Activated CD4-positive, alpha-beta T cell treated with anti-CD3 and anti-CD28 coated beads, Interleukin-2, amount 10 ng/mL, durations not matched to agents 24 days and 14 days (primary cell): ENCODE measurements at regions of chr5 and their contacts with region 1.

Region 1: DNA sequence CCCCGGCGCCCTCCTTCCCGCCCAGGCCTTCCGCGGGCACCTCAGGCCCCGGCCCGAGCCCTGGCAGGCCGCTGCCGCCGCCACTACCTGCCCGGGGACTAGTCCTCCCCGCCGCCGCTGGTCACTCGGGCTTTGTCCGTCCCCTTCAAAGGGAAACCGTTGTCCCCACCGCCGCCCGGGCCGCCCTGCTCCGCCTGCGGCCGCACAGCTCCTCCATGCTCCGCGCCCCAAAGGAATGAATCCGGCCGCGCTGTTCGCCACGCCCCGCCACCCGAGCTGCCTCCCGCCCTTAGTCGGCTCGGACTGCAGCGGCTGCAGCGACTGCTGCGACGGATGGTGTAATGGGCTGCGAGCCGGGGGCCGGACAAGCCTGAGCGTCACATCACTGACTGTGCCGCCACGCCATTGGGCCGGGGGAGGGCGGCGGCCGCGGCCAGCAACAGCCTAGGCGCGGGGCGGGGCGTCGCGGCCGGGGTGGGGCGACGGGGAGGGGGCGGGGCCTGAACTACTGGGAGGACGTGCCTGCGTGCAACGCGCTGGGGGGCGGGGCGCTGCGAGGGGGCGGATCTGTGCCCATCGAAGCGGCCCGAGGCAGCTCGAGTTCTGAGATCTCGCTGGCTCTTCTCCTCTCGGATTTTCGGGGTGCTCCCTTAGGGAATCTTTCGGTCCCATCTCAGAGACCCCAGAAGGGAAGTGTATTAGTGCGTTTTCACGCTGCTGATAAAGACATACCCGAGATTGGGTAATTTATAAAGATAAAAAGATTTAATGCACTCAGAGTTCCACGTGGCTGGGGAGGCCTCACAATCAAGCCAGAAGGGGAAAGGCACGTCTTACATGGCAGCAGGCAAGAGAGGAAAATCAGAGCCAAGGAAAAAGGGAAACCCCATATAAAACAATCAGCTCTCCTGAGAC is at the start of gene FEM1C:
- DNase-seq: peak; percentile 97
- H3K4me3 Mint-ChIP-seq: peak within 1 kb of the TSS; percentile 99
- H3K27ac Mint-ChIP-seq: peak within 1 kb of the TSS; percentile 100
- H3K4me1 Mint-ChIP-seq: peaks cover 38% of the 10 kb centered on the region
- H3K27me3 Mint-ChIP-seq: no peaks in the 10 kb centered on the region
- total RNA-seq, gene FEM1C: 13.9 and 14.6 TPM in 2 replicates

Region 2: GRCh38 chr5:114166081-114166480 is 1378.6 kb before region 1 on chr5:
- intact Hi-C with region 1: no loop called
- DNase-seq: no peak
- H3K4me3 Mint-ChIP-seq: no peak overlapping the region
- H3K27ac Mint-ChIP-seq: no peak overlapping the region
- H3K4me1 Mint-ChIP-seq: no peaks in the 10 kb centered on the region
- H3K27me3 Mint-ChIP-seq: no peaks in the 10 kb centered on the region

Region 3: DNA sequence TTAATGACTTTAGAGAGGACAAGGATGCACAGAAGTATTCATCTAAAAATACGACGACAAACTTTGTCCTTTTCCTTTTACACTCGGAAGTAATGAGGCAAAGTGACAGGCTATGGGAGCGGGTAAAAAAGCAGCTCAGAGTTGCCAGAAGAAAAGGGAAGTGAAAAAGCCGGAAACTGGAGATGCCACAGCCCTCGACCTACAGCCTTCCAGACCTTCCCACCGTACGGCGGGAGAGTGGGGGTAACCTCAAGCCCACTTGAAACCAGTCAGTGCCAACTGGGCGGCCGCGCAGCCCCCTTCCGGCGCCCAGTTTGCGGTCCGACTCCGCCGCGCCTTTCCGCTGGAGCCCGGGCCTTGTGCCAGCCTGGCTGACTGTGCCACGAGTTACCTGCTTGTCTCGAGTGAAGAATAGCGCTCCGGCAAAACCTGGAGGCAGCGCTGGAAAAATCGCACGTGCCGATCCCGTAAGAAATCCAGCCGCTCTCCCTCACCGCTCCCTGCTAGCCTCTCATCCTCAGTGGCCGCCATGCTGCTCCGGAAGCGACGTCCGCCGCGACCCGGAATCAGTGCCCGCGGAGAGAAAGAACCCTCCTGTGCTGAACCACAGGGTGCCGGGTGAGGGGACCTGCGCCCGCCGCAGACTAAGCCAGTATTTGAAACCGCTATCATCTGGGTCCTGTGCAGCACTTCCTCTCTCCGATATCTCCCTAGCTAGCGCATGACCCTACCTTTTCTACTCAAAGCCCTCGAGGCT is 282.2 kb before region 1 on chr5 and contains the start of gene PGGT1B:
- intact Hi-C with region 1: loop called (anchors 1 kb)
- DNase-seq: peak; percentile 91
- H3K4me3 Mint-ChIP-seq: peak within 1 kb of the TSS; percentile 96
- H3K27ac Mint-ChIP-seq: peak within 1 kb of the TSS; percentile 88
- H3K4me1 Mint-ChIP-seq: peaks cover 36% of the 10 kb centered on the region
- H3K27me3 Mint-ChIP-seq: no peaks in the 10 kb centered on the region
- total RNA-seq, gene PGGT1B: 37.9 and 42.0 TPM in 2 replicates

Region 4: GRCh38 chr5:115377468-115378217 is 167.1 kb before region 1 on chr5:
- intact Hi-C with region 1: no loop called
- DNase-seq: no peak
- H3K4me3 Mint-ChIP-seq: no peak overlapping the region
- H3K27ac Mint-ChIP-seq: peak overlapping the region; percentile 4
- H3K4me1 Mint-ChIP-seq: peaks cover 17% of the 10 kb centered on the region
- H3K27me3 Mint-ChIP-seq: no peaks in the 10 kb centered on the region

Region 5: GRCh38 chr5:115460472-115460871 is 84.2 kb before region 1 on chr5:
- intact Hi-C with region 1: loop called (anchors 1 kb)
- DNase-seq: peak; percentile 60
- H3K4me3 Mint-ChIP-seq: no peak overlapping the region
- H3K27ac Mint-ChIP-seq: no peak overlapping the region
- H3K4me1 Mint-ChIP-seq: peaks cover 10% of the 10 kb centered on the region
- H3K27me3 Mint-ChIP-seq: peaks cover 15% of the 10 kb centered on the region

Region 6: DNA sequence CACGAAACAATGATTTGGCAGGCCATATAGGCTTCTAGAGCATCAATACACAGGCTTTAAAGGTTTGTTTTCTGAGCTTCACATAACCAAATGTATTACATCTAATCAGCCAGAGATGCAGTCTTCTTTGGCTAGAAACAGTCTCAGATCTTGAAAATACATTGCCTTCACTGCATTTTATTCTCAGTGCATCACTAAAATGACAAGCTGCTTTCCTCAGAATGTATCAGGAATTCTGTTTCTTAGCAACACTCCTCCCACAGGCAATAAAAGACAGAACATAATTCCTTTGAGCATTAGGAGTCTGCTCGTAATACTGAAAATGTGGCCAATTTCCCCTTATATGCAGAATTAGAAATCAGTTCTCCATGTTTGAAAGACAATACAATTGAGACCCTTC is 37.0 kb before region 1 on chr5:
- intact Hi-C with region 1: no loop called
- DNase-seq: no peak
- H3K4me3 Mint-ChIP-seq: no peak overlapping the region
- H3K27ac Mint-ChIP-seq: no peak overlapping the region
- H3K4me1 Mint-ChIP-seq: no peaks in the 10 kb centered on the region
- H3K27me3 Mint-ChIP-seq: peaks cover 5% of the 10 kb centered on the region

Region 7: DNA sequence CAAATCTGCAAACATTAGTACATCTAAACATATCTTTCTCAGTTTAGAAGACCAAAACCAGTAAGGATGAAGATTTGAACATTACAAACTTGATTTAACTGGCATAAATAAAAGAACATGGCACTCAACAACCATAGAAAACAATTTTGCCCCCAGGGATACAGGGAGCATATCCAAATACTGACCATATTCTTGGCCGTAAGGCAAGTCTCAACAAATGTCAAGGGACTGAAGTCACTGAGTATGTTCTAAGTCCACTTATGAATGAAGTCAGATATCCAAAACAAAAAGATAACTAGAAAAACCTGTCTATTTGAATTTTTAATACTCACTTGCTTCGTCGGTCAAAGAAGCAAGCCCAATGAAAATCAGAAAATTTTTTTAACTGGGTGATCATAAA is 14.3 kb before region 1 on chr5:
- intact Hi-C with region 1: loop called (anchors 1 kb)
- DNase-seq: no peak
- H3K4me3 Mint-ChIP-seq: no peak overlapping the region
- H3K27ac Mint-ChIP-seq: no peak overlapping the region
- H3K4me1 Mint-ChIP-seq: peaks cover 31% of the 10 kb centered on the region
- H3K27me3 Mint-ChIP-seq: no peaks in the 10 kb centered on the region

Region 8: DNA sequence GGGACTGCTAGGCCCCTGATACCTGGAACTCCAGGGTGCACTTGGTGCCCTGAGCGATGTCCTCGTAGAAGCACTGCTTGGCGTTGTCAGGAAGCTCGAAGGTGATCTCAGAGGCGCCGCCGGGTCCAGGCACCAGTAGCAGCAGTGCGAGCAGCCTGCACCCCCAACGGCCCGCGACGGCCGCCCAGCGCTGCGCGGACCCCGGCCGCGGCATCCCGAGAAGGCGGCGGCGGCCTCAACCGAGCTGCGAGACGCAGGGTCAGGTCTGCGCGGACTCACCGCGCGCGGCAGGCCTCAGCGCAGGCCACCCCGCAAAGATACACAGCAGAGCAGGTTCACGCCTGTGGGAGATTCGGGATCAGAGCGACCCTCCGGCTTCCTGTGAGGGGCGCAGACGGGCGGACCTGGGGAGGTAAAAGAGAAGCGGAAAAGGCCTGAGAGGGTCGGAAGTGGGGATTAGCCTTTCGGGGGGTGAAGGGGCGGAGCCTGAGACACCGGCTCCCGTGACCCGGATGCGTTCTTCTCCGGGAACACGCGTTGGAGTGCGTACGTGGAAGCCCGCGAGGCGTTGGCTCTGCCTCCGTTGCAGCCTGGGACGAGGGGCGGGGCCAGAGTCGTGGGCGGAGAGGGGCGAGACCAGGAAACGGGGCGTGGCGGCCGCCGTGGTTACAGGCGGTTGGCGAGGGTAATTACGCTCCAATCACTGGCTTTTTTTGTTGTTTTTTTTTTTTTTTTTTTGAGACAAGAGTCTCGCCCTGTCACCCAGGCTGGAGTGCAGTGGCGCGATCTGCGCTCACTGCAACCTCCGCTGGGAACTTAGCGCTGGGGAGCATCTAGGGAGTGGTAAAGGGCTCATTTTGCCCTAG is 81.1 kb after region 1 on chr5 and contains the start of gene TMED7:
- intact Hi-C with region 1: loop called (anchors 1 kb)
- DNase-seq: peak; percentile 100
- H3K4me3 Mint-ChIP-seq: no peak within 1 kb of the TSS
- H3K27ac Mint-ChIP-seq: peak within 1 kb of the TSS; percentile 88
- H3K4me1 Mint-ChIP-seq: peaks cover 19% of the 10 kb centered on the region
- H3K27me3 Mint-ChIP-seq: peaks cover 10% of the 10 kb centered on the region
- total RNA-seq, gene TMED7: 40.9 and 41.9 TPM in 2 replicates